MCF 10A (cell line): ENCODE measurements at regions of chr4 and their contacts with region 1.

Region 1: DNA sequence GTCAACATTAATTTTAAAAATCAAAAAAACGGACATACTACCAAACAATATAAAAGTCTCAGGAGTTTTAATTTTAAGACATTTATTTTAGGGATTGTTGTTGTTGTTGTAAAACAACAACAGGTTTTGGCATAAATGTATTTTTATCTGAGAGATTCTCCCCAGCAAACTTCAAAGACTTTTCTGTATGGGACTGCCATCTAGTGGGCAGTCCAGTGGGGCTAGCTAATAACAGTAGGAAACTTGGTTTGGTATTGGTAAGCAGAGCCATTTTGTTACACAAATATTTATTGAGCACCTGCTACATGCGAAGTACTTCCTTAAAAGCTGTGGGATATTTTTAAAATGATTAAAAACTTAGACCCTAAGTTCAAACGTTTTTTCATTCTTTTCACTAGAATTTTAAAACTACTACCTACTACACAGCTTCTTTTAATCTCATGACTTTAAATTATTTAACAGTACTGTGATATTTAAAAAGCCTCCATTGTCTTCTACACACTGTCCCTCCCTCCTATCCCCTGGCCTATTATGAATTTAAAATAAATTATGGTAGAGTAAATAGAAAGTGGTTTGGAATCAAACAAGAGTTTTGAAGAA is 1028.4 kb upstream of the INTU start:
- DNase-seq: peak; percentile 55
- H3K4me3 Mint-ChIP-seq: no peak overlapping the region
- H3K27ac Mint-ChIP-seq: no peak overlapping the region
- H3K4me1 Mint-ChIP-seq: no peaks in the 10 kb centered on the region
- H3K27me3 Mint-ChIP-seq: no peaks in the 10 kb centered on the region
- CTCF ChIP-seq: peak; percentile 61

Region 2: DNA sequence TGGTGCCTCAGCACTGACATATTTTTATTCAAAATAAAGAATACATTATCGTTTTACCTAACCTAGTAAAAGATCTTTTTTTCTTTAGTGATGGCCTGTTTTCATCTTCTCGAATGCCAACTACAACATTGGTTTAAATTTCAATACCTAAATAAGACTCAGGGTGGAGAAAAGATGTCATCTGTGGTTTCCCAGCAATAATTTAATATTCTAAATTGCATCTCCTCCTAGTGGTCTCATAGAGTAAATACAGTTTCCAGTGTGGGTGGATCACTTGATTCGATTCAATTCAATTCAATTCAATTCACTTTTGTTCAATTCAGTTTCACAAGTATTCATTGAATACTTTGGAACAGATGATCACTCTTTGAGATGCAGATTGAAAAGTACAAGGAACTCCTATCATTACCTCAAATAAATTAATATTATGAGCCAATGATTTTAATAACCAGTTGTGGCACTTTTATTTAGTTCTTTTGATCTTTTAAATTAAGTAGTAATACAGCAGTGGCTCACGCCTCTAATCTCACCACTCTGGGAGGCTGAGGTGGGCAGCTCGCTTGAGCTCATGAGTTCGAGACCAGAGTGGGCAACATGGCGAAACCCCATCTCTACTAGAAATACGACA is 862.4 kb before region 1 on chr4:
- CTCF ChIA-PET with region 1: no interaction called
- POLR2A ChIA-PET with region 1: no interaction called
- intact Hi-C with region 1: loop called (anchors 5 kb)
- DNase-seq: peak; percentile 50
- H3K4me3 Mint-ChIP-seq: no peak overlapping the region
- H3K27ac Mint-ChIP-seq: no peak overlapping the region
- H3K4me1 Mint-ChIP-seq: peaks cover 7% of the 10 kb centered on the region
- H3K27me3 Mint-ChIP-seq: no peaks in the 10 kb centered on the region
- CTCF ChIP-seq: peak; percentile 62

Region 3: GRCh38 chr4:126223784-126224407 is 380.5 kb before region 1 on chr4:
- CTCF ChIA-PET with region 1: interaction called, 9 read pairs
- POLR2A ChIA-PET with region 1: no interaction called
- intact Hi-C with region 1: loop called (anchors 1 kb)
- DNase-seq: peak; percentile 39
- H3K4me3 Mint-ChIP-seq: no peak overlapping the region
- H3K27ac Mint-ChIP-seq: no peak overlapping the region
- H3K4me1 Mint-ChIP-seq: no peaks in the 10 kb centered on the region
- H3K27me3 Mint-ChIP-seq: no peaks in the 10 kb centered on the region
- CTCF ChIP-seq: peak; percentile 62

Region 4: DNA sequence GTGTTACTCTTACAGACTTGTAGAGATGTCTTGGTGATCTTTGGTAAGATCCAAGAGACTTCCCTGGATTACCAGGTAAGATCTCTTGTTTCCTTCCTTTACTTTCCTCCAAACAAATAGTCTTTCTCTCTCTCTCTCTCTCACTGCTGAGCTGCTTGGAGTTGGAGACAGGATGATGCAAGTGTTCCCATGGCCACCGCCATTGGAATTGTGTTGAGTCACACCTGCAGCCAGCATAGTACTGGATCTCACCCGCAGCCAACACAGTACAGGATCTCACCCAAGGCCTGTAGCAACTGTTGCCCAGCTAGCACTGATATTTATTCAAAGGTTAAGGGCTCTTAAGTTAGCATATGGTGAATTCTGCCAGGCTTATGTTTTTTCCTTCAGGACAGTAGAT is 208.7 kb before region 1 on chr4:
- CTCF ChIA-PET with region 1: no interaction called
- POLR2A ChIA-PET with region 1: no interaction called
- intact Hi-C with region 1: loop called (anchors 10 kb)
- DNase-seq: peak; percentile 75
- H3K4me3 Mint-ChIP-seq: no peak overlapping the region
- H3K27ac Mint-ChIP-seq: peak overlapping the region; percentile 29
- H3K4me1 Mint-ChIP-seq: peaks cover 12% of the 10 kb centered on the region
- H3K27me3 Mint-ChIP-seq: no peaks in the 10 kb centered on the region
- CTCF ChIP-seq: no peak